ENCODE measurements at regions of chr5 and their contacts with region 1.

Region 1: DNA sequence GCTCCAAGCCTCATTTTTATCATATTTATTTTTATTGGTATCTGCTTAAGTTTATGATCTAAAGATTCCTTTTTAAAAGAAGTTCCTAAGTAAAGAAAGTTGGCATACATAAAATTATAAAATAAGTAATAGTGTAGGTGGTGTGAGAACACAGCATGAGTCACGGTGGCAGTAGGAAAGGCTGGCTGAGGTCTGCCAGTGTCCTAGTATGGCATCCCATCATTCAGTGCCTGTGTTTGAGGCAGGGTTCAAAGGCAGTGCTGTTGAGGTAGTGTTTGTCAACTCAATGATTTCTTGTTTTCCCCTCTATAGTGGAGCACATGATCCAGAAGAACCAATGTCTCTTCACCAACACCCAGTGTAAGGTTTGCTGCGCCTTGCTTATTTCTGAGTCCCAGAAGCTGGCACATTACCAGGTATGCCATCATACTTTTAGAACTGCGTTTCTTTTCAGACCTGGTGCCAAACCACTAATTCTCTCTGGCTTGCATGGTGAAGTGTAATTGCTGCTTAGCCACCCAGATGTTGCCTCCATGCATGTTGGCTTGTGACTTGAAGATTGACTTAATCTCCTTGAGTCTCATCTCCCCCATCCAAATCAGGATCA is 18.4 kb downstream of the ZNF346 start:
- DNase-seq: no peak
- H3K4me3 ChIP-seq: no peak overlapping the region
- H3K27ac ChIP-seq: no peak overlapping the region
- H3K4me1 ChIP-seq: peaks cover 11% of the 10 kb centered on the region
- H3K27me3 ChIP-seq: no peaks in the 10 kb centered on the region
- CTCF ChIP-seq: no peak

Region 2: GRCh38 chr5:176144508-176144907 is 896.4 kb before region 1 on chr5:
- intact Hi-C with region 1: loop called (anchors 10 kb)
- DNase-seq: no peak
- H3K4me3 ChIP-seq: no peak overlapping the region
- H3K27ac ChIP-seq: no peak overlapping the region
- H3K4me1 ChIP-seq: no peaks in the 10 kb centered on the region
- H3K27me3 ChIP-seq: peaks cover 79% of the 10 kb centered on the region
- CTCF ChIP-seq: no peak

Region 3: DNA sequence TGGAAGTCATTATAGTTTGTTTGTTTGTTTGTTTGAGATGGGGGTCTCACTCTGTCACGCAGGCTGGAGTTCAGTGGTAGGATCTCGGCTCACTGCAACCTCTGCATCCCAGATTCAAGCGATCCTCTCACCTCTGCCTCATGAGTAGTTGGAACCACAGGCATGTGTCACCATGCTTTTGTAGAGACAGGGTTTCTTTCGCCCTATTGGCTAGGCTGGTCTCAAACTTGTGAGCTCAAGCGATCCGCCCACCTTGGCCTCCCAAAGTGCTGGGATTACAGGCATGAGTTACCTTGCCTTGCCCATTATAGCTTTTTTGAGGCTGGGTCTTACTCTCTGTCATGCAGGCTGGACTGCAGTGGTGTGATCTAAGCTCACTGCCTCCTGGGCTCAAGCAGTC is 121.5 kb after region 1 on chr5:
- intact Hi-C with region 1: no loop called
- DNase-seq: no peak
- H3K4me3 ChIP-seq: no peak overlapping the region
- H3K27ac ChIP-seq: no peak overlapping the region
- H3K4me1 ChIP-seq: peaks cover 8% of the 10 kb centered on the region
- H3K27me3 ChIP-seq: no peaks in the 10 kb centered on the region
- CTCF ChIP-seq: no peak